ENCODE measurements at regions of chr2 and their contacts with region 1.

Region 1: GRCh38 chr2:11681722-11682589 is 12.0 kb upstream of the NTSR2 start:
- DNase-seq: no peak
- H3K4me3 ChIP-seq: no peak overlapping the region
- H3K27ac ChIP-seq: no peak overlapping the region
- H3K4me1 ChIP-seq: no peaks in the 10 kb centered on the region
- H3K27me3 ChIP-seq: peaks cover 4 to 14% of the 10 kb centered on the region in 2 experiments
- CTCF ChIP-seq: peak; percentile 82 to 87
- POLR2A ChIP-seq: no peak

Region 2: GRCh38 chr2:11344342-11344955 is 337.5 kb before region 1 on chr2 and contains the start of gene ROCK2:
- CTCF ChIA-PET with region 1: no interaction called
- POLR2A ChIA-PET with region 1: no interaction called
- dilution Hi-C with region 1: no loop called
- intact Hi-C with region 1: no loop called
- DNase-seq: peak; percentile 82
- H3K4me3 ChIP-seq: peak within 1 kb of the TSS; percentile 79 to 94 (median 92)
- H3K27ac ChIP-seq: peak within 1 kb of the TSS; percentile 98
- H3K4me1 ChIP-seq: peaks cover 25% of the 10 kb centered on the region
- H3K27me3 ChIP-seq: no peaks in the 10 kb centered on the region
- CTCF ChIP-seq: no peak
- POLR2A ChIP-seq: peak; percentile 73
- total RNA-seq, gene ROCK2: 54.3 and 56.5 TPM in 2 replicates

Region 3: GRCh38 chr2:11477994-11478393 is 204.0 kb before region 1 on chr2:
- CTCF ChIA-PET with region 1: interaction called, 10 read pairs
- POLR2A ChIA-PET with region 1: no interaction called
- dilution Hi-C with region 1: no loop called
- intact Hi-C with region 1: loop called (anchors 1 kb)
- DNase-seq: peak; percentile 69
- H3K4me3 ChIP-seq: no peak overlapping the region
- H3K27ac ChIP-seq: no peak overlapping the region
- H3K4me1 ChIP-seq: no peaks in the 10 kb centered on the region
- H3K27me3 ChIP-seq: peaks cover 25 to 41% of the 10 kb centered on the region in 2 experiments
- CTCF ChIP-seq: peak; percentile 68 to 73
- POLR2A ChIP-seq: no peak

Region 4: DNA sequence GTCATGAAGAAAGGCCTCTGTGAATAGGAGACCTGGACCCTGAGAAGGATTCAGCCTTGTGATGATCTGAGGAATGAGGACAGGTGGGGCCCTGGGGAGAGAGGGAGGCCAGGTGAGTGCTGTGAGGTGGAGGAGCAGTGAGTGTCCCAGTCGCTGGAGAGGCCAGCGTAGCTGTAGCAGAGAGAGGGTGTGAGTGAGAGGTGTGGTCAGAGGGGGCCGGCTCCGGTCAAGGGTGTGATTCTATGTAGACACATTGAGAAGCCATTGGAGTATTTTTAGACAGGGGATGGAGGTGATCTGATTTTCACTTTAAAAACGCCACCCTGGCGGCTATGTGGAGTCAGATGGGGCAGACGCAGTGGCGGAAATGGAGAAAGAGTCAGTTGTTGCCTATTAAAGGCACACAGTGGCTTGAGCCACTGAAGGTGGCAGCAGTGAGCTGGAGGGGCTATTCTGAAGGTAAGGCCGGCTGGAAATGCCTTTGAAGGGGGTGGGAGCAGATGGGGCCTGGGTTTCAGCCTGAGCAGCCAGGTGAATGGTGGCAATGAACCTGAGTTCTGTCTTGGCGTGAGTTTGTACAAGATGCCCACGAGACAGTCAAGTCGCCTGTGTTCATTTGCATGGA is 92.5 kb before region 1 on chr2:
- CTCF ChIA-PET with region 1: interaction called, 5 read pairs
- POLR2A ChIA-PET with region 1: no interaction called
- dilution Hi-C with region 1: no loop called
- intact Hi-C with region 1: loop called (anchors 2 kb)
- DNase-seq: no peak
- H3K4me3 ChIP-seq: no peak overlapping the region
- H3K27ac ChIP-seq: no peak overlapping the region
- H3K4me1 ChIP-seq: no peaks in the 10 kb centered on the region
- H3K27me3 ChIP-seq: no peaks in the 10 kb centered on the region
- CTCF ChIP-seq: peak in 1 of 2 donors; percentile 27
- POLR2A ChIP-seq: no peak

Region 5: GRCh38 chr2:11598228-11598731 is 83.7 kb before region 1 on chr2:
- CTCF ChIA-PET with region 1: no interaction called
- POLR2A ChIA-PET with region 1: no interaction called
- dilution Hi-C with region 1: no loop called
- intact Hi-C with region 1: loop called (anchors 5 kb)
- DNase-seq: no peak
- H3K4me3 ChIP-seq: no peak overlapping the region
- H3K27ac ChIP-seq: no peak overlapping the region
- H3K4me1 ChIP-seq: peaks cover 17% of the 10 kb centered on the region
- H3K27me3 ChIP-seq: peaks cover 0 to 2% of the 10 kb centered on the region in 2 experiments
- CTCF ChIP-seq: no peak
- POLR2A ChIP-seq: no peak

Measured in endothelial cell of umbilical vein (primary cell).